Left ventricle myocardium inferior (tissue), 1 donor: ENCODE measurements at regions of chr2 and their contacts with region 1.

Region 1: GRCh38 chr2:13000664-13001363 is 284.1 kb downstream of the TRIB2 start:
- DNase-seq: no peak
- H3K4me3 ChIP-seq: peak overlapping the region; percentile 52
- H3K27ac ChIP-seq: peak overlapping the region; percentile 67
- H3K4me1 ChIP-seq: peaks cover 50% of the 10 kb centered on the region
- H3K27me3 ChIP-seq: no peaks in the 10 kb centered on the region
- CTCF ChIP-seq: no peak

Region 2: GRCh38 chr2:12728221-12728777 is 272.5 kb before region 1 on chr2:
- intact Hi-C with region 1: loop called (anchors 5 kb)
- DNase-seq: no peak
- H3K4me3 ChIP-seq: no peak overlapping the region
- H3K27ac ChIP-seq: peak overlapping the region; percentile 99
- H3K4me1 ChIP-seq: peaks cover 100% of the 10 kb centered on the region
- H3K27me3 ChIP-seq: no peaks in the 10 kb centered on the region
- CTCF ChIP-seq: no peak